ENCODE measurements at regions of chr16 and their contacts with region 1.

Region 1: GRCh38 chr16:70267516-70267915 is 15.8 kb upstream of the EXOSC6 start:
- DNase-seq: peak; percentile 52
- ATAC-seq: peak; percentile 29; the same call in 1 of the 2 replicates
- H3K4me3 ChIP-seq: no peak overlapping the region
- H3K27ac ChIP-seq: no peak overlapping the region
- H3K4me1 ChIP-seq: no peaks in the 10 kb centered on the region
- H3K27me3 ChIP-seq: no peaks in the 10 kb centered on the region
- CTCF ChIP-seq: peak; percentile 66

Region 2: DNA sequence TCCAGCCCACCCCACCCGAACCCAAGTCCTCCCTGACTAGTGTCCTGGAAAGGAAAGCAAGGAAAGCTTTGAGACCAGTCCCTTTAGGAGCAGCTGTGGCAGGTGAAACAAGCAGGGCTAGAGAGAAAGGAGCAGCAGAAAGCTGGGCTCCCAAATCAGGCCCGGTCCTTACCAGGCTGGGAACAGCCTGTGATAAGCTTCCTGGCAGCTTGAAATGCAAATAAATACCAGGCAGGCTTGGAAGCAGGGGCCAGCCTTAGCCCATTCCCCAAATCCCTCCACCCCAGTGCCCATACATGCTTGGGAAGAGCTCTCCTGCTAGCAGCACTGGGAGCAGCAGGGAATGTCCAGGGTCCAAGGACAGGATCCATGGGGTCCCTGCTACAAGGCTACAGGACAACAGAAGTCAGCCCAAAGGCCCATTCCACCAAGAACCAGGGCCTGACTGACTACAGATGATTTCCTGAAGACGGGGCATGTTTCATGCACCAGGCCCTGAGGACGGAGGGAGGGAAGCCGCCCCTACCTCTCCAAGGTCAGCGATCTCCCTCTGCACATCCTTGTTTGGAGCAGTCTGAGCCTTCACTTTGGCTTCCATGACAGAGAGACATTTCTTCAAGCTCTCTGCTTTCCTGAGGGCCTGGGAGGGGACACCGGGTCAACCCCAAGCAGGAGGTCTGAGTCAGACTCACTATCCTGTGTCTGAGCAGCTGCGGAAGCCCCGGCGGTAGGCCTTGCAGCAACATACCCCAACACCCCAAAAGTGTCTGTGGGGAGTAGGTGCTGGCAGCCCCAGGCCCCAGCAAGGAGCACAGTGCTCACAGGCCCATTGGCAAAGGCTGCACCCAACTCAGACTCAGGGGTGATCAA is 13.2 kb before region 1 on chr16:
- CTCF ChIA-PET with region 1: interaction called, 16 read pairs
- POLR2A ChIA-PET with region 1: no interaction called
- intact Hi-C with region 1: no loop called
- DNase-seq: no peak
- ATAC-seq: no peak
- H3K4me3 ChIP-seq: no peak overlapping the region
- H3K27ac ChIP-seq: no peak overlapping the region
- H3K4me1 ChIP-seq: no peaks in the 10 kb centered on the region
- H3K27me3 ChIP-seq: no peaks in the 10 kb centered on the region
- CTCF ChIP-seq: peak; percentile 23; the same call in 1 of the 2 replicates

Region 3: DNA sequence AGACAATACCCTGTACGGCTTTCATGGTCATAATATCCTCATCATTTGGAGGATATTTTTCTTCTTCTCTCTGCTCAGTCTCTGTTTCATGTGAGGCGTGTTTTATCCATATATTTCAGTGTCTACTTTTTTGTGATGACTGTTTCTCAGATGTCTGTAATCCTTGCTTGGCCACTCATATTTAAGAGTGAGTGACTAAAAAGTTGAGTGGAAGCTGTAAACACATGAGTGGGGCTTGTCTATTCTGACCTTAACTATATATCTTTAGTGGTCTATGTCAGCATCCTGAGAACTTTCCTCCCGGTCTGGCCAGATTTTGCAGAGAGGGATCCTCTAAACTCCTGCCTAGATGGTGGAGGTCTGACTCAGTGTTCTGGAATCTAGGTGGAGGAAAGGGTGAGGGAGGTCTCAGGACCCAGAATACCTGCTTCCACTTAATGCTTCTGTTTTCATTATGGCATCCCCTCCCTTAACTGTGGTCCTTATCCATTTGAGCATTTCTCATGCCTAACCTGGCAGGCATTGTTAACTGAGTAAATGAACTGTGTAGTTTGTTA is 37.5 kb after region 1 on chr16:
- CTCF ChIA-PET with region 1: no interaction called
- POLR2A ChIA-PET with region 1: no interaction called
- intact Hi-C with region 1: no loop called
- DNase-seq: peak; percentile 63
- ATAC-seq: peak; percentile 82
- H3K4me3 ChIP-seq: no peak overlapping the region
- H3K27ac ChIP-seq: no peak overlapping the region
- H3K4me1 ChIP-seq: peaks cover 20% of the 10 kb centered on the region
- H3K27me3 ChIP-seq: no peaks in the 10 kb centered on the region
- CTCF ChIP-seq: no peak

Region 4: DNA sequence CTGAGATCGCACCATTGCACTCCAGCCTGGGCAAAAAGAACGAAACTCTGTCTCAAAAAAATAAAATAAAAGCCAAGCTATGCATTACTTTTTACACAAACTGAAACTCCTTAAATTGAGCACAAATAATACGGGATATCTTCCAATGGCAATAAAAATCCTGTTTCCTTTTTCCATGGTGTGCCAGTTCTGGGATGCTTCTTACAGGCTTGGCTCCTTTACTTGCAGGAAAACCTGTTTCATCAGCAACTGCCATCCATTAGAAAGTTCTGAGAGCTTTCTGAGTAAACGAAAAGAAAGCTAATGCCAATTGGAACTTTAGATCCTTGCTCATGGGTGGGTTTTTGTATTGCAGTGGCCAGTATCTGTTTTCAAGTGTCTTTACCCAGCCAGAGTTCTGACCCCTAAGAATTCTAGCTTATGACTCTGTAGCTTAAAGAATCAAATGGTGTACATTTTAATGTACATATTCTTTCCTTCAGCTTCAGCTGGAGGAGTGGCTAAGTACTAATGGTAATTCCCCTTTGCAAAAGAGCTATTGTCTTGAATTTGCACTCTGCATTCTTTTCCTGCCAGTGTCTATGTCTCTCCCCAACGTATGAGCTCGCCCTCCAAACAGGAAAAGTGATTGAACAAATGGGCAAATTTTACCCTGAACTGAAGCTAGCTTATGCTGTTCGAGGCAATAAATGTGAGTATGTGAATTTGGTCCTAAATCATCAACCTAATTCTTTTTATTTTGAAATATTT is 57.7 kb after region 1 on chr16:
- CTCF ChIA-PET with region 1: no interaction called
- POLR2A ChIA-PET with region 1: no interaction called
- intact Hi-C with region 1: no loop called
- DNase-seq: no peak
- ATAC-seq: no peak
- H3K4me3 ChIP-seq: no peak overlapping the region
- H3K27ac ChIP-seq: no peak overlapping the region
- H3K4me1 ChIP-seq: peaks cover 4% of the 10 kb centered on the region; the same call in 1 of the 2 replicates
- H3K27me3 ChIP-seq: no peaks in the 10 kb centered on the region
- CTCF ChIP-seq: no peak

Region 5: GRCh38 chr16:70348991-70349390 is 81.5 kb after region 1 on chr16:
- CTCF ChIA-PET with region 1: no interaction called
- POLR2A ChIA-PET with region 1: no interaction called
- intact Hi-C with region 1: no loop called
- DNase-seq: no peak
- ATAC-seq: no peak
- H3K4me3 ChIP-seq: no peak overlapping the region
- H3K27ac ChIP-seq: no peak overlapping the region
- H3K4me1 ChIP-seq: peaks cover 9% of the 10 kb centered on the region; the same call in 1 of the 2 replicates
- H3K27me3 ChIP-seq: no peaks in the 10 kb centered on the region
- CTCF ChIP-seq: no peak

Measured in PC-3 (cell line).